Activated CD4-positive, alpha-beta memory T cell treated with anti-CD3 and anti-CD28 coated beads for 36 hours (primary cell): ENCODE measurements at regions of chr3 and their contacts with region 1.

Region 1: GRCh38 chr3:42101048-42101447 is 9.9 kb downstream of the TRAK1 start:
- DNase-seq: no peak
- H3K4me3 Mint-ChIP-seq: no peak overlapping the region
- H3K27ac Mint-ChIP-seq: no peak overlapping the region
- H3K4me1 Mint-ChIP-seq: peaks cover 10% of the 10 kb centered on the region
- H3K27me3 Mint-ChIP-seq: no peaks in the 10 kb centered on the region

Region 2: GRCh38 chr3:41751597-41751996 is 349.5 kb before region 1 on chr3:
- CTCF ChIA-PET with region 1: no interaction called
- POLR2A ChIA-PET with region 1: no interaction called
- intact Hi-C with region 1: no loop called
- DNase-seq: no peak
- H3K4me3 Mint-ChIP-seq: no peak overlapping the region
- H3K27ac Mint-ChIP-seq: no peak overlapping the region
- H3K4me1 Mint-ChIP-seq: peaks cover 11% of the 10 kb centered on the region
- H3K27me3 Mint-ChIP-seq: no peaks in the 10 kb centered on the region

Region 3: GRCh38 chr3:41881233-41881821 is 219.7 kb before region 1 on chr3:
- CTCF ChIA-PET with region 1: interaction called, 30 read pairs
- POLR2A ChIA-PET with region 1: no interaction called
- intact Hi-C with region 1: no loop called
- DNase-seq: no peak
- H3K4me3 Mint-ChIP-seq: no peak overlapping the region
- H3K27ac Mint-ChIP-seq: no peak overlapping the region
- H3K4me1 Mint-ChIP-seq: no peaks in the 10 kb centered on the region
- H3K27me3 Mint-ChIP-seq: no peaks in the 10 kb centered on the region

Region 4: DNA sequence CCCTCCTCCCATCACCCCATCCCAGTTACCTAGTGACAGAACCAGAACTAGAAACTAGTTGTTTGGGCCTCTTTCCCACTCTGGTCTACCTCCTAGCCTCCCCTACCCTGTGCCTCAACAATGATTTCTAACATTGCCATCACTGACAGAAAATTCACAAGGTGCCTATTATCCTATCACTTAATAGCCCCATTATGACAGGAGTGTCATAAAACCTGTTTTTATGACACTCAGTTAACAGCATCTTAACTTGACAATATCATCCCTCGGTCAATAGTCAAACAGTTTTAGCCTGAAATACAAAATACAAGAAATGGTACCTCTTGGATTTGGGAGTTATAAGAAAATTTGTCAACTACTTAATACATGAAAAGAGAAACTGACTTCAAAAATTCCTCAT is 185.7 kb before region 1 on chr3:
- CTCF ChIA-PET with region 1: interaction called, 13 read pairs
- POLR2A ChIA-PET with region 1: no interaction called
- intact Hi-C with region 1: no loop called
- DNase-seq: no peak
- H3K4me3 Mint-ChIP-seq: no peak overlapping the region
- H3K27ac Mint-ChIP-seq: no peak overlapping the region
- H3K4me1 Mint-ChIP-seq: no peaks in the 10 kb centered on the region
- H3K27me3 Mint-ChIP-seq: no peaks in the 10 kb centered on the region

Region 5: GRCh38 chr3:41997702-41998550 is 103.1 kb before region 1 on chr3:
- CTCF ChIA-PET with region 1: interaction called, 27 read pairs
- POLR2A ChIA-PET with region 1: no interaction called
- intact Hi-C with region 1: no loop called
- DNase-seq: no peak
- H3K4me3 Mint-ChIP-seq: no peak overlapping the region
- H3K27ac Mint-ChIP-seq: no peak overlapping the region
- H3K4me1 Mint-ChIP-seq: no peaks in the 10 kb centered on the region
- H3K27me3 Mint-ChIP-seq: no peaks in the 10 kb centered on the region

Region 6: GRCh38 chr3:42080452-42080891 is 20.6 kb before region 1 on chr3:
- CTCF ChIA-PET with region 1: interaction called, 16 read pairs
- POLR2A ChIA-PET with region 1: no interaction called
- intact Hi-C with region 1: no loop called
- DNase-seq: peak; percentile 51
- H3K4me3 Mint-ChIP-seq: no peak overlapping the region
- H3K27ac Mint-ChIP-seq: peak overlapping the region; percentile 80
- H3K4me1 Mint-ChIP-seq: peaks cover 59% of the 10 kb centered on the region
- H3K27me3 Mint-ChIP-seq: no peaks in the 10 kb centered on the region

Region 7: GRCh38 chr3:42134877-42135464 is 33.9 kb after region 1 on chr3:
- CTCF ChIA-PET with region 1: no interaction called
- POLR2A ChIA-PET with region 1: no interaction called
- intact Hi-C with region 1: no loop called
- DNase-seq: no peak
- H3K4me3 Mint-ChIP-seq: no peak overlapping the region
- H3K27ac Mint-ChIP-seq: no peak overlapping the region
- H3K4me1 Mint-ChIP-seq: no peaks in the 10 kb centered on the region
- H3K27me3 Mint-ChIP-seq: no peaks in the 10 kb centered on the region

Region 8: DNA sequence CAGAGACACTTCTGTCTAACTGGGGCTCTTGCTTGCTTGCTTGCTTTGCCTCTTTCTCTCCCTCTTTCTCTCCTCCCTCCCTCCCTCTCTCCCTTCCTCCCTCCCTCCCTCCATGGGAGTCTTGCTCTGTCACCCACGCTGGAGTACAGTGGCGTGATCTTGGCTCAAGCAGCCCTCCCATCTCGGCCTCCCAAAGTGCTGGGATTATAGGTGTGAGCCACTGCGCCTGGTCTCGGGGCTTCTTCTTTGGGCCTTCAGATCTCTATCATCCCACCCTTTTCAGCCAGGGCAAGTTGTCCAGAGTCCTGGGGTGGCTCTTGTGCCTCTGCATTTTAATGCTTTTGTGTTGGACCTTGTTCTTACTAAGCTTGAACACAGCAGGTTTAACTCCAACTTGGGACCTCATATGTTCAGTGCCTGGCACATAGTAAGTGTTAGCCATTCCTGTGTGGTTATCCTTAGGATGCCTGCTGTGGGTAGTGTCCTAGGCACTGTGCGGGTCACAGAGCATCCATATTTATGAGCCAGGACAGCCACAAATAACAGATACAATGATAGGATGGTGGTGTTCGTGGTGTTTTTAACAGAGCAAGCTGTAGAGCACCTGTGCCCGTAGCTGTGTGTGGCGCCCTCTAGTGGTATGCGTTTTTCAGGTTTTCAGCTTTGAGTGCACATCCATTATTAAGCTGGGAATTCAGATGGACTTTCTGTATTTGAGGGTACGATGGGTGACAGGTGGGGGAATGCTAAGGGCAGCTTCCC is 89.8 kb after region 1 on chr3:
- CTCF ChIA-PET with region 1: interaction called, 10 read pairs
- POLR2A ChIA-PET with region 1: no interaction called
- intact Hi-C with region 1: no loop called
- DNase-seq: peak; percentile 74
- H3K4me3 Mint-ChIP-seq: no peak overlapping the region
- H3K27ac Mint-ChIP-seq: no peak overlapping the region
- H3K4me1 Mint-ChIP-seq: peaks cover 4% of the 10 kb centered on the region
- H3K27me3 Mint-ChIP-seq: no peaks in the 10 kb centered on the region